Esophagus muscularis mucosa (tissue), 4 donors: ENCODE measurements at regions of chr1 and their contacts with region 1.

Region 1: DNA sequence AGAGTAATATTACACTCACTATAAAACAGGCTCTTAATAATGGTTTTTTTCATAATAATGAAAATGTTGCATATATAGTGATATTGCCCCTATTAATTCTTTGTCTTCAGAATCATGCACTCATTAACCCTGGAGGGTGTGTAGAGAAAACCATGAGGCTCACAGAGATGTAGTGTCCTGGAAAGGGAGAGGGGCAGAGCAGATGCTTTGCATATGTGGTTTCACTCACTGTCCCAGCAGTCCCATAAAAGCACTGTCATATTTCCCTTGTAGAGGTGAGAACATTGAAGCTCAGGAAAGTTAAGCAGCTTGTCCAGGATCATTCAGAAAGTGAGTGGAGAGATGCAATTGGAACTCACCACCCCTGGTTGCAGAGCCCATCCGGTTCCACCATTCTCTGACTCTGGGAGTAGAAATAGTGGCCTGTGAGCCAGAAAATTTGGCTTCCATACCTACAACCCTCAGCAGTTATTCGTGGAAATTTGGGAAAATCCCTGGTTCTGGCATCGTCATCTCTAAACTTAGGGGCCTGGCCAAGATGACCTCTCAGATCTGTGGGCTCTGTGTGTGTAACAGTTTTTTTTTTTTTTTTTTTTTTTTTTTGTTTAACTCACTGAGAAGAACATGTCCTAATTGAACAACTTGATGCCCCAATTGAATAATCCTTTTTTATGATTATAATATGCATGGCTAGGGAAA is 86.4 kb downstream of the RGL1 start:
- DNase-seq: peak; percentile 4
- H3K4me3 ChIP-seq: no peak overlapping the region
- H3K27ac ChIP-seq: peak overlapping the region in 1 of 4 donors; percentile 49
- H3K4me1 ChIP-seq: peaks cover 15 to 63% (median 60%) of the 10 kb centered on the region in 4 donors
- H3K27me3 ChIP-seq: no peaks in the 10 kb centered on the region
- CTCF ChIP-seq: no peak
- EP300 ChIP-seq: no peak
- POLR2A ChIP-seq: no peak

Region 2: GRCh38 chr1:183278640-183279591 is 612.4 kb before region 1 on chr1:
- intact Hi-C with region 1: no loop called
- DNase-seq: no peak
- H3K4me3 ChIP-seq: no peak overlapping the region
- H3K27ac ChIP-seq: peak overlapping the region in 3 of 4 donors; percentile 3 to 46 (median 13)
- H3K4me1 ChIP-seq: peaks cover 32 to 39% (median 36%) of the 10 kb centered on the region in 4 donors
- H3K27me3 ChIP-seq: no peaks in the 10 kb centered on the region
- CTCF ChIP-seq: no peak
- EP300 ChIP-seq: no peak
- POLR2A ChIP-seq: no peak

Region 3: DNA sequence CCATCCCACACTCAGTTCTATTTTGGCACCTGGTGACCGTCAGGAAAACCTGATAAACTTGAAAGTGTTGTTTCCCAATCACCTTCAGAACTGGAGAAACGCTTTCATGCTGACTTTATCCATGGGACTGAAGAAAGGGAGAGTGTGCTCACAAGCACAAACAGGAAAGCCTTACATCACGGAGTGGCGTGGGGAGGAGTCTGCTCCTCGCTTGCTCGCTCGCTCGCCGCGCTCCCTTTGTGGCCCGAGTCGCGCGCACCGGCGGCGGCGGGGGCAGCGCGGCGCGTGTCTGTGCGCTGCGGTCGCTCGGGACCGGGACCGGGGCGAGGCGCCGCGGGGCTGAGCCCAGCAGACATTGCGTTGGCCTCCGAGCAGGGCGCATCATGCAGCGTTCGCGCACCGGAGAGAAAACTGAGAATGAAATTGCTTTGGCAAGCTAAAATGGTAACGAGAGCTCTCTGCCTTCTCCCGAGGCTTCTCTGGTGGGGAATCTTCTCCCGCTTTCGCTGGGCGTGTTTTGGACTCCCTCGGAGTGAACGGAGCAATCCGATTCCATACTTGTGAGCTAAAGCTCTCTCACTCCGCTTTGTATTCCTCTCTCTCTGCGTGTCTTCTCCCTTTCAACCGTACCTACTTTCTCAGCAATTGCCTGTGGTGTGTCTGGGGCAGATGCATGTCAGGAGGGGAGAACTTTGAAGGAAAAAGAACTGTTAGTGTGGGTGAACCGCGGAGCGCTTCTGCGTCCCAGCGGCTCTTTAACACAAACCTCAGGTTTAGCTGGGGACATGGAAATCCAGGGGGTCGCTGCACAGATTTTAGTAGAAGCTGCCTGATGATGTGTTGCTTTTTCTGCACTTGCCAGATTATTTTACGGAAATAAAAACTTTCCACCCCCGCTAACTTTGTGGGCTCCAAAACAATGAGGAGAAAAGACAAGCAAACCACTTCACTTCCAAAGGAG is 86.1 kb before region 1 on chr1 and contains the start of gene RGL1:
- intact Hi-C with region 1: loop called (anchors 5 kb)
- DNase-seq: no peak
- H3K4me3 ChIP-seq: peak within 1 kb of the TSS; percentile 61 to 71 (median 71)
- H3K27ac ChIP-seq: peak within 1 kb of the TSS; percentile 82 to 86 (median 86)
- H3K4me1 ChIP-seq: peaks cover 11 to 48% (median 45%) of the 10 kb centered on the region in 4 donors
- H3K27me3 ChIP-seq: no peaks in the 10 kb centered on the region
- CTCF ChIP-seq: no peak
- EP300 ChIP-seq: no peak
- POLR2A ChIP-seq: peak; percentile 31
- total RNA-seq, gene RGL1: 31.5 to 51.5 (median 37.5) TPM

Region 4: DNA sequence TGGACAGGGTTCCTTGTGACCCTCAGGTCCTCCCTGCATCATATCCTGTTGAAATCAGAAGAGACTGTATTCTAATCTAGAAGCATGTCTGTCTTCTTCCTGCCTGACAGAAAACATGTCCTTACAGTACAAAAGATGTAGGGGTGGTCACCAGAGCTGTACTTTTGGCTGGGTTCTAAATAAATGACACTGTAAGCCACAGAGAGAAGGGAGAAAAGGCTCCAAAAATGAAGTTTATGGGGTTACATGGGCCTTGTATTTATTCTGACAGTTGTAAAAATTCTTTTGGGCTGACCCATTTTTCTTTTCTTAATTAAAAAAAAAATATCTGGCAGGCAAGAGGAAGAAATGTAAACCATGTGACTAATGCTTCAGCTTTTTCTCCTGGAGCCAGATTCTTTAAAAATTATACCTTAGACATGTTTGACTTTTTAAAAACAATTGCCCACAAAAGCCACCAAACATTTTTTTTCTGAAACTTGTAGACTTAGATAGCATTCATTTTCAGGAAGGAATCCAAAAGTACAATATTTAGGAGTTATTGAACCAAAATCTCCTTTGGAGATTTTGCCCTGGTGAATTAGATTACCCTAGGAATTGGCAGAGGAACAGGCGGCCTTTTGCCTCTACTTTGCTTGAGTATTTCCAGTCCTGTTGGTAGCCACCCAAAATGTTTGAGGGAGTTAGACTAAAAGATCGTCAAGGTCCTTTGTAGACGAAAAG is 69.3 kb before region 1 on chr1:
- intact Hi-C with region 1: no loop called
- DNase-seq: no peak
- H3K4me3 ChIP-seq: no peak overlapping the region
- H3K27ac ChIP-seq: peak overlapping the region; percentile 76 to 81 (median 80)
- H3K4me1 ChIP-seq: peaks cover 34 to 96% (median 89%) of the 10 kb centered on the region in 4 donors
- H3K27me3 ChIP-seq: no peaks in the 10 kb centered on the region
- CTCF ChIP-seq: no peak
- EP300 ChIP-seq: no peak
- POLR2A ChIP-seq: no peak